ENCODE measurements at regions of chr4 and their contacts with region 1.

Region 1: DNA sequence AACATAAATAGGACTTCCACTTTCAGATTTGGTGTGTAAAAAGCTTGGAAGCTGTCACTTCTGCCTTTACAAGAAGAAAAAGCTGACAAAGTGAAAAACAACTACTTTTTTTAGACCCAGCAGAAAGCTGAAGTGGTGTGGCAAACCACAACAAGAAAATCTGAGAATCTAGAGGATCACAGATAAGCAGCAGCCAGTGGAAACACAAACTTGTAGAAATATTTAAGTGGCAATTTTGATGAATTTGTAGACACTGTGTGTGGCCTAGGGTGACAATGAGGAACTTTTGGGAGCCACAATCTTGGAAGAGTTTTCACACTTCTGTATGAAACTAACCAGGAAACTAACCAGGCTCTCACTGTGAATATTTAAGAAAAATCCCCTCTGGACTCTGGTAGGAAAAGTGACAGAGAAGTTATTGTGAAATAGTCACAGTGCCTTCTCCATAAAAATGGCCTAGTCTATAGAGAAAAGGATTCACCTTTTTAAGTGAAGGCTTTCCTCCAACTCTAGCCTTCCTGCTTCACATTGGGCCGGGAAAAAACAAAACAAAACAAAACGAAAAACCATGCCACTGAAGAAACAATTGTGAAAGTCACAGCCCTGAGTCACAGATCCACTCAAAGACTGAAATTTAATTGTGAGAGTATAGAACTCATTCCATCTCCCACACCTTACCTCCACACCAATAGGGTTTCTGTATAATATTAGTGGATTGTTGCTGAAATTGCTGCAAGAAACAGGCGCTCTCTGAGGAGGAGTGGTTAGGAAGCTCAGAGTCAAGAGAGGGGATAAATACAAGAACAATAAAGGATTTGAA is 26.7 kb upstream of the GUCY1A1 start:
- DNase-seq: peak in 3 of 9 donors; percentile 0 to 14 (median 1)
- ATAC-seq: peak; percentile 29
- H3K4me3 ChIP-seq: no peak overlapping the region
- H3K4me3 Mint-ChIP-seq: peak overlapping the region in 1 of 10 donors; percentile 69
- H3K27ac ChIP-seq: no peak overlapping the region
- H3K27ac Mint-ChIP-seq: peak overlapping the region in 1 of 9 donors; percentile 36
- H3K4me1 ChIP-seq: no peaks in the 10 kb centered on the region
- H3K4me1 Mint-ChIP-seq: peaks cover 0 to 20% (median 15%) of the 10 kb centered on the region in 7 donors
- H3K27me3 ChIP-seq: no peaks in the 10 kb centered on the region
- H3K27me3 Mint-ChIP-seq: peaks cover 5 to 22% (median 12%) of the 10 kb centered on the region in 5 donors

Region 2: GRCh38 chr4:155582971-155583437 is 56.9 kb before region 1 on chr4:
- CTCF ChIA-PET with region 1: no interaction called
- POLR2A ChIA-PET with region 1: no interaction called
- intact Hi-C with region 1: loop called in 1 of 2 experiments (anchors 1 kb)
- DNase-seq: peak in 7 of 9 donors; percentile 4 to 46 (median 31)
- ATAC-seq: peak; percentile 56
- H3K4me3 ChIP-seq: no peak overlapping the region
- H3K4me3 Mint-ChIP-seq: peak overlapping the region in 7 of 10 donors; percentile 25 to 66 (median 47)
- H3K27ac ChIP-seq: no peak overlapping the region
- H3K27ac Mint-ChIP-seq: peak overlapping the region in 6 of 9 donors; percentile 20 to 49 (median 42)
- H3K4me1 ChIP-seq: no peaks in the 10 kb centered on the region
- H3K4me1 Mint-ChIP-seq: peaks cover 0 to 15% (median 11%) of the 10 kb centered on the region in 7 donors
- H3K27me3 ChIP-seq: no peaks in the 10 kb centered on the region
- H3K27me3 Mint-ChIP-seq: peaks cover 0 to 2% (median 0%) of the 10 kb centered on the region in 5 donors

Region 3: GRCh38 chr4:155722816-155723499 is 83.0 kb after region 1 on chr4:
- CTCF ChIA-PET with region 1: no interaction called
- POLR2A ChIA-PET with region 1: no interaction called
- intact Hi-C with region 1: no loop called
- DNase-seq: no peak
- ATAC-seq: no peak
- H3K4me3 ChIP-seq: no peak overlapping the region
- H3K4me3 Mint-ChIP-seq: no peak overlapping the region
- H3K27ac ChIP-seq: no peak overlapping the region
- H3K27ac Mint-ChIP-seq: no peak overlapping the region
- H3K4me1 ChIP-seq: no peaks in the 10 kb centered on the region
- H3K4me1 Mint-ChIP-seq: peaks cover 0 to 1% (median 0%) of the 10 kb centered on the region in 7 donors
- H3K27me3 ChIP-seq: no peaks in the 10 kb centered on the region
- H3K27me3 Mint-ChIP-seq: peaks cover 0 to 9% (median 5%) of the 10 kb centered on the region in 5 donors